Heart right ventricle (tissue), 16 donors: ENCODE measurements at regions of chr10 and their contacts with region 1.

Region 1: DNA sequence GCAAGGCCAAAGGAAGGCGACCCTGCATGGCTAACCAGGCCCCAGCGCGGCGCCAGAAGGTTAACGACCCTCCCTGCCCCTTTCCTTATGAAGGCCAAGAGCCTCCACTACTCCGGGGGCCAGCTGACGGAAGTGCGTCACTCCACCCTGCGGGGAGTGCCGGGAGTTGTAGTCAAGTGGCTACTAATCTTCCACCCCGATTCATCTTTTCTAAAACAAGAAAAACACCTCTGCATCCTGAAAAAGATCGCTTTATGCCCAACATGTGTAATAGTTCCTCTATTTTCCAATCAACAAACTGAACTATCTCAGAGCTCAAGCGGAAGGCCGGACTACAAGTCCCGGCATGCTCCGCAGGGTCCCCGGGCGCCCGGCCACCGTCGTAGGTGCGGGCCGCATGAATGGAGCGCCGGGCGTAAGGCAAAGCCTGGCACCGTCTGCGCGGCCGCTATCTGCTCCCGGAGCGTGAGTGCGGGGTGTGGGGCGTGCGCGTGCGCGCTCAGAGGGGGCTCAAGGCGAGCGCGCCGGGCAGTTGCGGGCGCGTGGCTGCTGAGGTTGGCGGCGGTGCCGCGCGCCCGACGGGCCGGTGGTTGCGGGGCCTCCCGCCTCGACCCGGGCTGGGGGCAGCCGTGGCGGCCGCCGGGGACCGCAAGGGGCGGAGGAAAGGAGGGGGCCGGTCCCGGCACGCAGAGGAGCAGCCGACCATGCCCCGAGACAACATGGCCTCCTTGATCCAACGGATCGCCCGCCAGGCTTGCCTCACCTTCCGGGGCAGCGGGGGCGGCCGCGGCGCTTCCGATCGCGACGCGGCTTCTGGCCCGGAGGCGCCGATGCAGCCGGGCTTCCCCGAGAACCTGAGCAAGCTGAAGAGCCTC is at the start of gene ADO:
- DNase-seq: peak; percentile 84 to 89
- ATAC-seq: peak; percentile 88 to 98 (median 94)
- H3K4me3 ChIP-seq: peak within 1 kb of the TSS; percentile 64 to 91 (median 84)
- H3K27ac ChIP-seq: peak within 1 kb of the TSS; percentile 85 to 99 (median 96)
- H3K4me1 ChIP-seq: peaks cover 3 to 54% (median 41%) of the 10 kb centered on the region in 9 donors
- H3K27me3 ChIP-seq: no peaks in the 10 kb centered on the region
- CTCF ChIP-seq: no peak
- total RNA-seq, gene ADO: 14.9 to 21.0 (median 17.5) TPM

Region 2: GRCh38 chr10:62637249-62638061 is 167.1 kb before region 1 on chr10:
- intact Hi-C with region 1: loop called in 1 of 10 experiments (anchors 5 kb)
- DNase-seq: no peak
- ATAC-seq: peak; percentile 48 to 84 (median 68)
- H3K4me3 ChIP-seq: peak overlapping the region in 7 of 10 donors; percentile 2 to 36 (median 31)
- H3K27ac ChIP-seq: peak overlapping the region in 9 of 10 donors; percentile 11 to 84 (median 64)
- H3K4me1 ChIP-seq: peaks cover 0 to 76% (median 17%) of the 10 kb centered on the region in 9 donors
- H3K27me3 ChIP-seq: no peaks in the 10 kb centered on the region
- CTCF ChIP-seq: no peak

Region 3: GRCh38 chr10:62760401-62760800 is 44.2 kb before region 1 on chr10:
- intact Hi-C with region 1: loop called in 2 of 10 experiments (anchors 5 to 10 kb)
- DNase-seq: peak; percentile 19 to 37
- ATAC-seq: peak in 7 of 8 donors; percentile 9 to 84 (median 64)
- H3K4me3 ChIP-seq: no peak overlapping the region
- H3K27ac ChIP-seq: peak overlapping the region in 8 of 10 donors; percentile 26 to 82 (median 68)
- H3K4me1 ChIP-seq: peaks cover 3 to 40% (median 27%) of the 10 kb centered on the region in 9 donors
- H3K27me3 ChIP-seq: no peaks in the 10 kb centered on the region
- CTCF ChIP-seq: no peak

Region 4: GRCh38 chr10:62769574-62770242 is 34.9 kb before region 1 on chr10:
- intact Hi-C with region 1: loop called in 2 of 10 experiments (anchors 2 to 5 kb)
- DNase-seq: no peak
- ATAC-seq: peak in 7 of 8 donors; percentile 50 to 72 (median 53)
- H3K4me3 ChIP-seq: no peak overlapping the region
- H3K27ac ChIP-seq: no peak overlapping the region
- H3K4me1 ChIP-seq: peaks cover 0 to 37% (median 19%) of the 10 kb centered on the region in 9 donors
- H3K27me3 ChIP-seq: no peaks in the 10 kb centered on the region
- CTCF ChIP-seq: no peak

Region 5: GRCh38 chr10:62860946-62861345 is 56.4 kb after region 1 on chr10:
- intact Hi-C with region 1: no loop called
- DNase-seq: no peak
- ATAC-seq: no peak
- H3K4me3 ChIP-seq: no peak overlapping the region
- H3K27ac ChIP-seq: no peak overlapping the region
- H3K4me1 ChIP-seq: peaks cover 0 to 21% (median 0%) of the 10 kb centered on the region in 9 donors
- H3K27me3 ChIP-seq: no peaks in the 10 kb centered on the region
- CTCF ChIP-seq: no peak

Region 6: DNA sequence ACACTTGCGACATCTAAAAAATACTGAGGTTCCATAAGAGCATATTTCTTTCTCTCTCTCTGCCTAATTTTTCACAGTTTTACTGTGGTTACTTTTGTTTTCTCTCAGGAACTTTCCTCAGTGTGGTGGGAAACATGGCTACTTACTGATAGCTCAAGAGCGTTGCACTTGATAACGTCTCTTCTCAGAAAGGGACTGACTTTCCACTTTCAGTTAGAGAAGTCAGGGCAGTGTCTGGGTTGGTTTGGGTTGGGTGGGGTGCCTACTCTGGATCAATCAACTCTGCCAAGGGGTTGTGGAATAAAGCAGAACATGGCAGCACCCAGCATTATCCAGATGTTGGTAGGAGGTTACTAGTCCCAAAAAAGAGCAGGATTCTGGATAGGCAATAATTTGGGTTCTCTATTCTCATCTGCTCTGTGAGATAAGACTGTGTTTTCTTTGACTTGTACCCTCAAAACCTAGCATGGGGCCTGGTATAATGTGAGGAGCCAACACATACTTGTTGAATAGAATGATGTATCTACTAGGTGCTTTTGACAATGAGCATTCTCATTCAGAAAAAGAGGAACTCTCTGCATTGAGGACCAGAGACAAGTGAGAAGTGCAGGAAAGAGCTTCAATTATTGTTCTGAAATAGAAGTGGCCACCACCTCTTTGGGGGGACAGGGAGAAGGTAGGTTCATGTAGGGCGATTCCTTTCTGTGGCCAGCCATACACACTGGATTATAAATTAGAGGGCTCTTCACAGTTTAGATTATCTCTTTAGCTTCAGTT is 1032.3 kb after region 1 on chr10:
- intact Hi-C with region 1: no loop called
- DNase-seq: no peak
- ATAC-seq: no peak
- H3K4me3 ChIP-seq: no peak overlapping the region
- H3K27ac ChIP-seq: no peak overlapping the region
- H3K4me1 ChIP-seq: no peaks in the 10 kb centered on the region
- H3K27me3 ChIP-seq: peaks cover 0 to 8% (median 0%) of the 10 kb centered on the region in 7 donors
- CTCF ChIP-seq: no peak